GM12878 (cell line): ENCODE measurements at regions of chr12 and their contacts with region 1.

Region 1: GRCh38 chr12:122752464-122753318 is at the start of gene DENR:
- DNase-seq: peak; percentile 91
- ATAC-seq: peak; percentile 95
- H3K4me3 ChIP-seq: peak within 1 kb of the TSS; percentile 81
- H3K27ac ChIP-seq: peak within 1 kb of the TSS; percentile 81
- H3K4me1 ChIP-seq: peaks cover 7% of the 10 kb centered on the region
- H3K27me3 ChIP-seq: no peaks in the 10 kb centered on the region
- CTCF ChIP-seq: peak; percentile 87 to 99 (median 99); a peak in 5 of 6 replicates
- EP300 ChIP-seq: no peak
- POLR2A ChIP-seq: peak; percentile 96
- RAD21 ChIP-seq: peak; percentile 94
- polyA plus RNA-seq, gene DENR: 29.4 to 44.5 TPM

Region 2: GRCh38 chr12:122399592-122400373 is 352.9 kb before region 1 on chr12:
- CTCF ChIA-PET with region 1: interaction called, 3 read pairs
- POLR2A ChIA-PET with region 1: interaction called, 3 read pairs
- RAD21 ChIA-PET with region 1: interaction called, 4 read pairs
- SMC1A ChIA-PET with region 1: interaction called, 7 read pairs
- in situ Hi-C with region 1: no loop called
- intact Hi-C with region 1: loop called (anchors 5 kb)
- DNase-seq: no peak
- ATAC-seq: peak; percentile 75
- H3K4me3 ChIP-seq: no peak overlapping the region
- H3K27ac ChIP-seq: peak overlapping the region; percentile 78
- H3K4me1 ChIP-seq: peaks cover 38% of the 10 kb centered on the region
- H3K27me3 ChIP-seq: no peaks in the 10 kb centered on the region
- CTCF ChIP-seq: peak; percentile 57 to 81 (median 76); a peak in 5 of 6 replicates
- EP300 ChIP-seq: no peak
- POLR2A ChIP-seq: no peak
- RAD21 ChIP-seq: peak; percentile 98

Region 3: DNA sequence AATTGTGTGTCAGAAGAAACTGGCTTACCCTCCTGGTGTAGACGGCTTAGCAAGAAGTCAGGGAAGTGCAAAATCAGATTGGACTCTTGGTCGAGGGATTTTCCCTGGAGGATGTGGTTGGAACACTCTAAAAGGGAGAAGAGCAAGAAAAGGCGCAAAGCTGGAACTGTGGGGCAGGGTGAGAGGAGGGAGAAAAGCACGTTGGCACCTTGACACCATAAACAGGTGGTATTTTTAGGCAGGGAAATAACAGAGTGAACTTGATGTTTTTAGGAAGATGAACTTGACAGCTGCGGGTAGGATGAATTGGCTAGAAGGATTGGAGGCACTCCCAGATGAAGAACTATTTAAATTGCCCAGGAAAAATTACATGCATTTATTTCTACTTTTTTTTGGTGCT is 117.2 kb before region 1 on chr12:
- CTCF ChIA-PET with region 1: interaction called, 38 read pairs
- POLR2A ChIA-PET with region 1: no interaction called
- RAD21 ChIA-PET with region 1: interaction called, 45 read pairs
- SMC1A ChIA-PET with region 1: interaction called, 28 read pairs
- in situ Hi-C with region 1: loop called (anchors 5 kb)
- intact Hi-C with region 1: loop called (anchors 1 kb)
- DNase-seq: no peak
- ATAC-seq: no peak
- H3K4me3 ChIP-seq: no peak overlapping the region
- H3K27ac ChIP-seq: no peak overlapping the region
- H3K4me1 ChIP-seq: no peaks in the 10 kb centered on the region
- H3K27me3 ChIP-seq: no peaks in the 10 kb centered on the region
- CTCF ChIP-seq: no peak
- EP300 ChIP-seq: no peak
- POLR2A ChIP-seq: no peak
- RAD21 ChIP-seq: no peak

Region 4: DNA sequence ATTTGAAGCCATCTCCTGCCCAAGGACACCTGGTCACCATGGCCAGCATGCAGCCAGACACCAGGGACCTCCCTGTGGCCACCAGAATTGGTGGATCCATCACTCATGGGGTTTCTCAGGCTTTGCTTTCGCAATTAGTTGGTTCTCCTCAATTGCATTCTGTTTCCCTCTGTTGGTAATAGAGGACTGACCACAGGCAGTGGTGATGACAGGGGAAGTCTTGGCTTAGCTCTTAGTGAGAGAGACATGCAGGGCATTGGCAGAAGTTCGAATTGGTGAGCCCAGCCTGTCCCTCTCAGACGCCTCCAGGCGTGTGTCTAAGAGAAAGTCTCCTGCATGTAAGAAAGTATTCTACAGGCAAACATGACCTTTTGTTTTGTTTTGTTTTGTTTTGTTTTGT is 70.9 kb before region 1 on chr12:
- CTCF ChIA-PET with region 1: no interaction called
- POLR2A ChIA-PET with region 1: no interaction called
- RAD21 ChIA-PET with region 1: no interaction called
- SMC1A ChIA-PET with region 1: no interaction called
- in situ Hi-C with region 1: no loop called
- intact Hi-C with region 1: loop called (anchors 5 kb)
- DNase-seq: peak; percentile 7
- ATAC-seq: peak; percentile 65
- H3K4me3 ChIP-seq: no peak overlapping the region
- H3K27ac ChIP-seq: no peak overlapping the region
- H3K4me1 ChIP-seq: no peaks in the 10 kb centered on the region; the same call in 1 of the 2 replicates
- H3K27me3 ChIP-seq: no peaks in the 10 kb centered on the region
- CTCF ChIP-seq: no peak
- EP300 ChIP-seq: no peak
- POLR2A ChIP-seq: no peak
- RAD21 ChIP-seq: no peak

Region 5: DNA sequence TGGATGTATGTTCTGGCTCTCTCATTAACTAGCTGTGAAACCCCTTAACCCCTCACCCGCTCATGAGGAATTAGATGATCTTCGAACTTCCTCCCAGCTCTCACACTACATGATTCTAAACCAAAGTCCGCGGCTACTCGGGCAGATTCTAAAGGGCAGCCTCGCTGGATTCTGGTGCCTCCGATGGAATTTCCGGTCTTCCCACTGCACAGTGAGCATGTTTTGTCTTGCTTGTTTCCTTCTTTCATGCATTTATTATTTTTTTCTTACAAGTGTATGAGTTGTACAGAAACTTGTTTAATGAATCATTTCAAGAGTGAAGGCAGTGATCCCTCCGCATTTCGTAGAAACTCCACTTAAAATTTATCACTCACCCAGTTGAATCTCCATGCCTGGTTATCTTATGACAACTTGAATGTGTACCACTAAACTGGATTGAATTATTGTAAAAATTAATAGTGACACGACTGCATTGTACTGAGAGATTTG is 31.6 kb before region 1 on chr12:
- CTCF ChIA-PET with region 1: interaction called, 4 read pairs
- POLR2A ChIA-PET with region 1: interaction called, 3 read pairs
- RAD21 ChIA-PET with region 1: interaction called, 7 read pairs
- SMC1A ChIA-PET with region 1: interaction called, 5 read pairs
- in situ Hi-C with region 1: no loop called
- intact Hi-C with region 1: loop called (anchors 2 kb)
- DNase-seq: peak; percentile 67
- ATAC-seq: peak; percentile 38
- H3K4me3 ChIP-seq: no peak overlapping the region
- H3K27ac ChIP-seq: peak overlapping the region; percentile 80
- H3K4me1 ChIP-seq: peaks cover 56% of the 10 kb centered on the region
- H3K27me3 ChIP-seq: no peaks in the 10 kb centered on the region
- CTCF ChIP-seq: no peak
- EP300 ChIP-seq: peak; percentile 55; a peak in 2 of 4 replicates
- POLR2A ChIP-seq: no peak
- RAD21 ChIP-seq: no peak

Region 6: GRCh38 chr12:123115409-123116121 is 362.9 kb after region 1 on chr12:
- CTCF ChIA-PET with region 1: no interaction called
- POLR2A ChIA-PET with region 1: no interaction called
- RAD21 ChIA-PET with region 1: no interaction called
- SMC1A ChIA-PET with region 1: no interaction called
- in situ Hi-C with region 1: no loop called
- intact Hi-C with region 1: no loop called
- DNase-seq: peak; percentile 8
- ATAC-seq: peak; percentile 47
- H3K4me3 ChIP-seq: no peak overlapping the region
- H3K27ac ChIP-seq: no peak overlapping the region
- H3K4me1 ChIP-seq: peaks cover 23% of the 10 kb centered on the region
- H3K27me3 ChIP-seq: no peaks in the 10 kb centered on the region
- CTCF ChIP-seq: no peak
- EP300 ChIP-seq: no peak
- POLR2A ChIP-seq: no peak
- RAD21 ChIP-seq: 0 out of 2 replicates have a peak, but pooled peaks have one; percentile 7